ENCODE measurements at regions of chr17 and their contacts with region 1.

Region 1: GRCh38 chr17:76452660-76453430 is at the start of gene UBE2O:
- DNase-seq: peak; percentile 93
- H3K4me3 ChIP-seq: peak within 1 kb of the TSS; percentile 84
- H3K27ac ChIP-seq: peak within 1 kb of the TSS; percentile 83
- H3K4me1 ChIP-seq: peaks cover 21% of the 10 kb centered on the region
- H3K27me3 ChIP-seq: no peaks in the 10 kb centered on the region
- CTCF ChIP-seq: peak; percentile 46
- total RNA-seq, gene UBE2O: 56.9 and 57.4 TPM in 2 replicates

Region 2: GRCh38 chr17:76473541-76473985 is 20.7 kb after region 1 on chr17:
- CTCF ChIA-PET with region 1: no interaction called
- POLR2A ChIA-PET with region 1: no interaction called
- intact Hi-C with region 1: no loop called
- DNase-seq: no peak
- H3K4me3 ChIP-seq: no peak overlapping the region
- H3K27ac ChIP-seq: no peak overlapping the region
- H3K4me1 ChIP-seq: no peaks in the 10 kb centered on the region
- H3K27me3 ChIP-seq: no peaks in the 10 kb centered on the region
- CTCF ChIP-seq: peak; percentile 37; the same call in 1 of the 2 replicates

Region 3: DNA sequence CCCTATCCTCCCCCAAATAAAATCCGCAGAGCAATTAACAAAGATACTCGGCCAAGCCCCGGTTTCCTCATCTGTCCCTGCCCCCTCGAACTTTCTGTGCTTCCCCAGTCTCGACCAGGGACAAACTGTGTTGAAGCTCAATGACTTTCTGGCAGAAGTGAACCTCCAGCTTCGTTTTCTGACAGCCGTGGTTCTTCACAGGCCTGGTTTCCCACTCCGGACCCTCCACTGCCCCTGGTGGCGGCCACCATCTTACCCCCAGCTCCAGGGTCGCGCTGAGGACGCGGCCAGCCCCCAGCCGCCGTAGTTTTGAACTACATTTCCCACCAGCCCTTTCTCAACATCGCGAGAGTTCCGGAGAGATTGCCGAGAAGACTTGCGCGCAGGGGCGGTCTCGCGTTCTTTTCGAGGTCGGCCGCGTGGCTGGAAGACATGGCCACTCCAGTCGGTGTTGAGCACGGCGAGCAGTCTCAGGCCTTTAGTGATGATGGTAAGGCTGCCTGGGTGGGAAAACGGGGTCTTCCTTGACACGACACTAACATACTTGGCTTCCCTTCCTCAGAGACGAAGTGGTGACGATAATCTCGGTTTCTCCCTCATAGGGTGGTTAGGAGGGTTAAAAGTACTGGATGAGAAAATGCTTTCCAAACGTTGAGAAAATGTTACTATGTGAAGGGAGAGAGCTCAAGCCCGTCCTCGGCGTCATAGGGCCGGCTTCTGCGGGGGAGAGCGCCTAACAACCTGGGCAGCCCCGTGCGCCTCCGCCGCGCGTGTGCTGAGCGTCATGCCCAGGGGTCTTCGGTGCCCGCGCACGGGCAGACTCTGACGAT is 104.7 kb after region 1 on chr17:
- CTCF ChIA-PET with region 1: no interaction called
- POLR2A ChIA-PET with region 1: no interaction called
- intact Hi-C with region 1: no loop called
- DNase-seq: peak; percentile 98
- H3K4me3 ChIP-seq: peak overlapping the region; percentile 71
- H3K27ac ChIP-seq: peak overlapping the region; percentile 88
- H3K4me1 ChIP-seq: peaks cover 32% of the 10 kb centered on the region
- H3K27me3 ChIP-seq: no peaks in the 10 kb centered on the region
- CTCF ChIP-seq: peak; percentile 72

Region 4: DNA sequence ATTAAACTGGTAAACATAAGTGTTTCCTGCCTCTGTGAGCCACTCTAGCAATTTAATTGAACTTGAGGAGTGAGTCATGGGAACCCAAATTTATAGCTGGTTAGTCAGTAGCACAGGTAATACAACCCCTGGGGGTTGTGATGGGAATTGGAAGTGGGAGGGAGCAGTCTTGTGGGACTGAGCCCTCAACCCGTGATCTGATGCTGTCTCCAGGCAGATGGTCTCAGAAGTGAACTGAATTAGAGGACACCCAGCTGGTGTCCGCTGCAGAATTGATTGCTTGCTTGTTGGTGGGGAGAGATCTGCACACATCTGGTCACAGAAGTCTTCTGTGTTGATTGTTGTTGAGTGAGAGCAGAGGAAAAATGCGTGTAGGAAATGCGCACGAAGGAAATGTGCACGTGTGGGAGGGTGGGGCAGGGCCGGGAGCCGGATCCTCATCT is 140.6 kb after region 1 on chr17:
- CTCF ChIA-PET with region 1: interaction called, 12 read pairs
- POLR2A ChIA-PET with region 1: no interaction called
- intact Hi-C with region 1: no loop called
- DNase-seq: no peak
- H3K4me3 ChIP-seq: no peak overlapping the region
- H3K27ac ChIP-seq: no peak overlapping the region
- H3K4me1 ChIP-seq: no peaks in the 10 kb centered on the region
- H3K27me3 ChIP-seq: no peaks in the 10 kb centered on the region
- CTCF ChIP-seq: no peak